GM12878 (cell line): ENCODE measurements at regions of chr17 and their contacts with region 1.

Region 1: GRCh38 chr17:30824356-30825145 is at the start of gene CRLF3:
- DNase-seq: peak; percentile 53
- ATAC-seq: peak; percentile 95
- H3K4me3 ChIP-seq: peak within 1 kb of the TSS; percentile 82
- H3K27ac ChIP-seq: peak within 1 kb of the TSS; percentile 84
- H3K4me1 ChIP-seq: peaks cover 9% of the 10 kb centered on the region
- H3K27me3 ChIP-seq: no peaks in the 10 kb centered on the region
- CTCF ChIP-seq: peak; percentile 52 to 58 (median 57); a peak in 5 of 6 replicates
- EP300 ChIP-seq: 0 out of 4 replicates have a peak, but pooled peaks of 1 of the 2 experiments have one; percentile 7
- POLR2A ChIP-seq: peak; percentile 96
- RAD21 ChIP-seq: peak; percentile 55
- polyA plus RNA-seq, gene CRLF3: 10.0 to 11.9 TPM

Region 2: DNA sequence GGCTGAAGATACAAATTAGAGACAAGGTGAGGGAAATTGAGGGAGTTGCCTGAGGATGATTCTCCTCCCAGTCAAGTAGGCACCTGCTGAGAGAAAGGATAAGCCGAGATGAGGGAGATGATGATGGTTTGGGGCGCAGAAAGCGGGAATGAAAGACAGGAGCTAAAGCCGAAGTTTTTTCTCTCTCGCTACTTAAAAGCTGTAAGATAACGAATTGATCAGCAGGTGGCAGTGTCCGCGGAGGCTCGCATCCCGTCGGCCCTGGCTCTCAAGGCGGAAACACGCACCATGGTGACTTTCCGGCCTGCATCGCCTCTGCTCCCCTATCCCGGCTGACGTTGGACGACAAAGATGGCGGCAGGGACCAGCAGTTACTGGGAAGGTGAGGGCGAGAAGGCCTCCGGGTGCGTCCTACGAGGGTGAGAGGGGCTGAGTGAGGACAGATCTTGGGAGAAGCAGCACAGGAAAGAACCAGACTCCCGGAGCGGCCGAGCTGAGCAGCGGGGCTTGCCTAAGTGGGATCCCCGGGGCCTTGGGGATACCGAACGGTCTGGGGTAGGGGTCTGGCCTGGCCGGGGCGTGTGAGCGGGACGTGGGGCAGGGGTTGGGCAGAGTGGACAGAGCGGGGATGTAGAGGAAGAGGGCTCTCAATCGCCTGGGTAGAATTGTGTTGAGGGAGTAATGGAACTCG is 347.3 kb before region 1 on chr17 and contains the start of gene GOSR1:
- CTCF ChIA-PET with region 1: interaction called, 7 read pairs
- POLR2A ChIA-PET with region 1: no interaction called
- RAD21 ChIA-PET with region 1: interaction called, 11 read pairs
- SMC1A ChIA-PET with region 1: interaction called, 3 read pairs
- in situ Hi-C with region 1: no loop called
- intact Hi-C with region 1: no loop called
- DNase-seq: peak; percentile 79
- ATAC-seq: peak; percentile 99
- H3K4me3 ChIP-seq: peak within 1 kb of the TSS; percentile 93
- H3K27ac ChIP-seq: peak within 1 kb of the TSS; percentile 99
- H3K4me1 ChIP-seq: peaks cover 7% of the 10 kb centered on the region
- H3K27me3 ChIP-seq: no peaks in the 10 kb centered on the region
- CTCF ChIP-seq: peak; percentile 72 to 88 (median 83)
- EP300 ChIP-seq: no peak
- POLR2A ChIP-seq: peak; percentile 100
- RAD21 ChIP-seq: peak; percentile 57
- polyA plus RNA-seq, gene GOSR1: 71.0 to 99.3 TPM

Region 3: GRCh38 chr17:30590081-30590733 is 234.3 kb before region 1 on chr17:
- CTCF ChIA-PET with region 1: no interaction called
- POLR2A ChIA-PET with region 1: no interaction called
- RAD21 ChIA-PET with region 1: no interaction called
- SMC1A ChIA-PET with region 1: no interaction called
- in situ Hi-C with region 1: no loop called
- intact Hi-C with region 1: no loop called
- DNase-seq: no peak
- ATAC-seq: no peak
- H3K4me3 ChIP-seq: no peak overlapping the region
- H3K27ac ChIP-seq: no peak overlapping the region
- H3K4me1 ChIP-seq: no peaks in the 10 kb centered on the region
- H3K27me3 ChIP-seq: no peaks in the 10 kb centered on the region
- CTCF ChIP-seq: no peak
- EP300 ChIP-seq: no peak
- POLR2A ChIP-seq: no peak
- RAD21 ChIP-seq: no peak

Region 4: GRCh38 chr17:30780343-30780742 is 44.2 kb before region 1 on chr17:
- CTCF ChIA-PET with region 1: interaction called, 11 read pairs
- POLR2A ChIA-PET with region 1: interaction called, 7 read pairs
- RAD21 ChIA-PET with region 1: interaction called, 4 read pairs
- SMC1A ChIA-PET with region 1: interaction called, 5 read pairs
- in situ Hi-C with region 1: no loop called
- intact Hi-C with region 1: no loop called
- DNase-seq: peak; percentile 47
- ATAC-seq: peak; percentile 87
- H3K4me3 ChIP-seq: no peak overlapping the region
- H3K27ac ChIP-seq: peak overlapping the region; percentile 55; the same call in 1 of the 2 replicates
- H3K4me1 ChIP-seq: peaks cover 3% of the 10 kb centered on the region
- H3K27me3 ChIP-seq: no peaks in the 10 kb centered on the region
- CTCF ChIP-seq: no peak
- EP300 ChIP-seq: no peak
- POLR2A ChIP-seq: no peak
- RAD21 ChIP-seq: no peak

Region 5: GRCh38 chr17:30808785-30809286 is 15.7 kb before region 1 on chr17:
- CTCF ChIA-PET with region 1: interaction called, 145 read pairs
- POLR2A ChIA-PET with region 1: interaction called, 32 read pairs
- RAD21 ChIA-PET with region 1: interaction called, 35 read pairs
- SMC1A ChIA-PET with region 1: interaction called, 43 read pairs
- in situ Hi-C with region 1: no loop called
- intact Hi-C with region 1: loop called (anchors 1 kb)
- DNase-seq: peak; percentile 91
- ATAC-seq: peak; percentile 98
- H3K4me3 ChIP-seq: peak overlapping the region; percentile 60; the same call in 1 of the 2 replicates
- H3K27ac ChIP-seq: peak overlapping the region; percentile 78
- H3K4me1 ChIP-seq: peaks cover 48% of the 10 kb centered on the region
- H3K27me3 ChIP-seq: no peaks in the 10 kb centered on the region
- CTCF ChIP-seq: no peak
- EP300 ChIP-seq: no peak; a peak in 1 of 4 replicates
- POLR2A ChIP-seq: 0 out of 2 replicates have a peak, but pooled peaks have one; percentile 32
- RAD21 ChIP-seq: no peak

Region 6: GRCh38 chr17:30956764-30957374 is 132.3 kb after region 1 on chr17:
- CTCF ChIA-PET with region 1: no interaction called
- POLR2A ChIA-PET with region 1: no interaction called
- RAD21 ChIA-PET with region 1: no interaction called
- SMC1A ChIA-PET with region 1: no interaction called
- in situ Hi-C with region 1: no loop called
- intact Hi-C with region 1: no loop called
- DNase-seq: no peak
- ATAC-seq: no peak
- H3K4me3 ChIP-seq: no peak overlapping the region
- H3K27ac ChIP-seq: no peak overlapping the region
- H3K4me1 ChIP-seq: peaks cover 46% of the 10 kb centered on the region
- H3K27me3 ChIP-seq: no peaks in the 10 kb centered on the region
- CTCF ChIP-seq: no peak
- EP300 ChIP-seq: no peak
- POLR2A ChIP-seq: no peak
- RAD21 ChIP-seq: no peak

Region 7: DNA sequence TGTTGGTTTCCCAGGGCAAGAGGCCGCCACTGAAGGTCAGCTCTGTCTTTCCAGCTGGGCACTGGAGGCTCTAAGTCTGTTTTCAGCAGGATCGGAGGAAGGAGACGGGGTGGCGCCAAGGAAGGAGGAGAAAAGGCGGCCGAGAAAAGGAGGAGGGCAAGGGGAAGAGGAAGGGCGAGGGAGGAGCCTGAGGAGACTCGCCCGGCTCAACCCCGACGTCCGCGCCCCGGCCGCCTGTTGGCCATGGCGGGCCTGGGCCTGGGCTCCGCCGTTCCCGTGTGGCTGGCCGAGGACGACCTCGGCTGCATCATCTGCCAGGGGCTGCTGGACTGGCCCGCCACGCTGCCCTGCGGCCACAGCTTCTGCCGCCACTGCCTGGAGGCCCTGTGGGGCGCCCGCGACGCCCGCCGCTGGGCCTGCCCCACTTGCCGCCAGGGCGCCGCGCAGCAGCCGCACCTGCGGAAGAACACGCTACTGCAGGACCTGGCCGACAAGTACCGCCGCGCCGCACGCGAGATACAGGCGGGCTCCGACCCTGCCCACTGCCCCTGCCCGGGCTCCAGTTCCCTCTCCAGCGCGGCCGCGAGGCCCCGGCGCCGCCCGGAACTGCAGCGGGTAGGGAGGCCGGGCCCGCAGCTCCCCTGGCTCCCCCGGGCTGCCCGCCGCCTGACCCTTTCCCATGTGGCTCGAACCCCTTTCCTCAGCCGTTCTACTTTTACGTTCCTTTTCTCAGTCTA is 146.4 kb after region 1 on chr17 and contains the start of gene RNF135:
- CTCF ChIA-PET with region 1: no interaction called
- POLR2A ChIA-PET with region 1: no interaction called
- RAD21 ChIA-PET with region 1: no interaction called
- SMC1A ChIA-PET with region 1: interaction called, 3 read pairs
- in situ Hi-C with region 1: no loop called
- intact Hi-C with region 1: loop called (anchors 5 kb)
- DNase-seq: no peak
- ATAC-seq: peak; percentile 84
- H3K4me3 ChIP-seq: peak within 1 kb of the TSS; percentile 87
- H3K27ac ChIP-seq: peak within 1 kb of the TSS; percentile 97
- H3K4me1 ChIP-seq: peaks cover 15% of the 10 kb centered on the region
- H3K27me3 ChIP-seq: no peaks in the 10 kb centered on the region
- CTCF ChIP-seq: peak in 2 of 3 experiments; percentile 2 to 25; a peak in 1 of 6 replicates
- EP300 ChIP-seq: no peak
- POLR2A ChIP-seq: peak; percentile 90
- RAD21 ChIP-seq: no peak
- polyA plus RNA-seq, gene RNF135: 12.8 to 15.4 TPM